CD4-positive, alpha-beta T cell (primary cell): ENCODE measurements at regions of chr17 and their contacts with region 1.

Region 1: GRCh38 chr17:78329263-78330059 is 30.4 kb downstream of the SOCS3 start:
- DNase-seq: peak in 3 of 14 experiments; percentile 43 to 72 (median 65)
- ATAC-seq: no peak
- H3K4me3 ChIP-seq: no peak overlapping the region
- H3K4me3 Mint-ChIP-seq: no peak overlapping the region
- H3K27ac ChIP-seq: no peak overlapping the region
- H3K27ac Mint-ChIP-seq: peak overlapping the region; percentile 37
- H3K4me1 ChIP-seq: peaks cover 39% of the 10 kb centered on the region
- H3K4me1 Mint-ChIP-seq: peaks cover 35% of the 10 kb centered on the region
- H3K27me3 ChIP-seq: no peaks in the 10 kb centered on the region
- H3K27me3 Mint-ChIP-seq: no peaks in the 10 kb centered on the region
- CTCF ChIP-seq: no peak

Region 2: GRCh38 chr17:78341559-78342448 is 12.3 kb after region 1 on chr17:
- CTCF ChIA-PET with region 1: no interaction called
- POLR2A ChIA-PET with region 1: interaction called, 10 read pairs
- intact Hi-C with region 1: no loop called
- DNase-seq: peak in 3 of 14 experiments; percentile 33 to 67 (median 63)
- ATAC-seq: no peak
- H3K4me3 ChIP-seq: peak overlapping the region; percentile 19
- H3K4me3 Mint-ChIP-seq: peak overlapping the region; percentile 51
- H3K27ac ChIP-seq: peak overlapping the region in 1 of 2 donors; percentile 7
- H3K27ac Mint-ChIP-seq: peak overlapping the region; percentile 99
- H3K4me1 ChIP-seq: peaks cover 79% of the 10 kb centered on the region
- H3K4me1 Mint-ChIP-seq: peaks cover 73% of the 10 kb centered on the region
- H3K27me3 ChIP-seq: no peaks in the 10 kb centered on the region
- H3K27me3 Mint-ChIP-seq: no peaks in the 10 kb centered on the region
- CTCF ChIP-seq: no peak